PC-9 (cell line): ENCODE measurements at regions of chr2 and their contacts with region 1.

Region 1: GRCh38 chr2:47344890-47345589 is 57.9 kb upstream of the MSH2 start:
- DNase-seq: peak; percentile 92 to 93
- H3K4me3 ChIP-seq: peak overlapping the region; percentile 57
- H3K27ac ChIP-seq: peak overlapping the region; percentile 62
- H3K4me1 ChIP-seq: peaks cover 64% of the 10 kb centered on the region
- H3K27me3 ChIP-seq: no peaks in the 10 kb centered on the region
- CTCF ChIP-seq: peak; percentile 64; the same call in 1 of the 2 replicates

Region 2: GRCh38 chr2:47070920-47071824 is 273.9 kb before region 1 on chr2:
- CTCF ChIA-PET with region 1: no interaction called
- POLR2A ChIA-PET with region 1: interaction called, 15 read pairs
- intact Hi-C with region 1: no loop called
- DNase-seq: peak; percentile 59 to 68
- H3K4me3 ChIP-seq: no peak overlapping the region
- H3K27ac ChIP-seq: peak overlapping the region; percentile 27
- H3K4me1 ChIP-seq: peaks cover 66% of the 10 kb centered on the region
- H3K27me3 ChIP-seq: no peaks in the 10 kb centered on the region
- CTCF ChIP-seq: no peak

Region 3: GRCh38 chr2:47402805-47403608 is 58.0 kb after region 1 on chr2 and contains the start of gene MSH2:
- CTCF ChIA-PET with region 1: interaction called, 8 read pairs
- POLR2A ChIA-PET with region 1: interaction called, 15 read pairs
- intact Hi-C with region 1: no loop called
- DNase-seq: peak; percentile 86 to 93
- H3K4me3 ChIP-seq: peak within 1 kb of the TSS; percentile 61
- H3K27ac ChIP-seq: peak within 1 kb of the TSS; percentile 42
- H3K4me1 ChIP-seq: peaks cover 20% of the 10 kb centered on the region
- H3K27me3 ChIP-seq: no peaks in the 10 kb centered on the region
- CTCF ChIP-seq: no peak
- total RNA-seq, gene MSH2: 41.7 and 54.2 TPM in 2 replicates

Region 4: GRCh38 chr2:47486841-47487497 is 141.9 kb after region 1 on chr2:
- CTCF ChIA-PET with region 1: no interaction called
- POLR2A ChIA-PET with region 1: interaction called, 10 read pairs
- intact Hi-C with region 1: no loop called
- DNase-seq: no peak
- H3K4me3 ChIP-seq: no peak overlapping the region
- H3K27ac ChIP-seq: no peak overlapping the region
- H3K4me1 ChIP-seq: peaks cover 15% of the 10 kb centered on the region
- H3K27me3 ChIP-seq: no peaks in the 10 kb centered on the region
- CTCF ChIP-seq: no peak

Region 5: DNA sequence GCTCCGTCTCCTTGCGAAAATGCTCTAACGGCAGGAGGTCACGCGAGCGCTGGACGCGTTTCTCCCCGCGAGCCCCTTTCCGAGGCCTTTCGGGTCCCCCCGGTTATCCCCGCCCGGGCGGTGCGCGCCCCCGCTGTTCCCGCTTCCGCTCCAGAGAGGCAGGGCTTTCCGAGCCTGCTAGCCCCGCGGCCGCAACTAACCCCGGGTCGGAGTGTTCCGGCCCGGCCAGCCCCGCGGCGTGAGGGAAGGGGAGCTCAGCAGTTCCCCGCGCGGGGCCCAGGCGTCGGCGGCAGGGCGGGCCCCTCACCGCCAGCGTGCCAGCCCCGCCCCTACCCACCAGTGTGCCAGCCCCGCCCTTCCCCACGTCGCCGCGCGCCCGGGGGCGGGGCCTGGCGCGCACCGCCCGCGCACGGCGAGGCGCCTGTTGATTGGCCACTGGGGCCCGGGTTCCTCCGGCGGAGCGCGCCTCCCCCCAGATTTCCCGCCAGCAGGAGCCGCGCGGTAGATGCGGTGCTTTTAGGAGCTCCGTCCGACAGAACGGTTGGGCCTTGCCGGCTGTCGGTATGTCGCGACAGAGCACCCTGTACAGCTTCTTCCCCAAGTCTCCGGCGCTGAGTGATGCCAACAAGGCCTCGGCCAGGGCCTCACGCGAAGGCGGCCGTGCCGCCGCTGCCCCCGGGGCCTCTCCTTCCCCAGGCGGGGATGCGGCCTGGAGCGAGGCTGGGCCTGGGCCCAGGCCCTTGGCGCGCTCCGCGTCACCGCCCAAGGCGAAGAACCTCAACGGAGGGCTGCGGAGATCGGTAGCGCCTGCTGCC is 437.8 kb after region 1 on chr2 and contains the start of gene MSH6:
- CTCF ChIA-PET with region 1: no interaction called
- POLR2A ChIA-PET with region 1: no interaction called
- intact Hi-C with region 1: loop called (anchors 5 kb)
- DNase-seq: peak; percentile 76 to 94
- H3K4me3 ChIP-seq: peak within 1 kb of the TSS; percentile 97
- H3K27ac ChIP-seq: peak within 1 kb of the TSS; percentile 57
- H3K4me1 ChIP-seq: peaks cover 18% of the 10 kb centered on the region
- H3K27me3 ChIP-seq: no peaks in the 10 kb centered on the region
- CTCF ChIP-seq: no peak
- total RNA-seq, gene MSH6: 105 and 123 TPM in 2 replicates